ENCODE measurements at regions of chr18 and their contacts with region 1.

Region 1: DNA sequence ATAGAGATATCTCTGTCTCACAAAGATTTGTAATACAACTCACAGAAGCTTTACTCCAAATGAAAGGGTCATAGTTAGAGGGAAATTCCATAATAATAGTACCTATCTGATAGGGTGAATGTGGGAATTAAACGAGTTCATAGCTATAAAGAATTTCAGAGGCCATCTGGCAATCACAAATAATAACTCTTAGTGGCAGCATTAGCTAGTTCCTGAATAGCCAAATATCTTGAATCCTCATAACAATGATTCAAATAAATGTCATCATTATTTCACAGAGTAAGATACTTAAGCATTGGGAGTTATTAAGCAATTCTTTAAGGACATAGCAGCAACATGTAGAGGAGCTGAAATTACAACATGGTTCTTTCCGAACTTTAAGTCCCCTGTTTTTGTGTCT is 1265.0 kb upstream of the PIK3C3 start:
- DNase-seq: no peak
- H3K4me3 ChIP-seq: no peak overlapping the region
- H3K27ac ChIP-seq: no peak overlapping the region
- H3K4me1 ChIP-seq: no peaks in the 10 kb centered on the region
- H3K27me3 ChIP-seq: no peaks in the 10 kb centered on the region
- CTCF ChIP-seq: no peak
- POLR2A ChIP-seq: no peak

Region 2: DNA sequence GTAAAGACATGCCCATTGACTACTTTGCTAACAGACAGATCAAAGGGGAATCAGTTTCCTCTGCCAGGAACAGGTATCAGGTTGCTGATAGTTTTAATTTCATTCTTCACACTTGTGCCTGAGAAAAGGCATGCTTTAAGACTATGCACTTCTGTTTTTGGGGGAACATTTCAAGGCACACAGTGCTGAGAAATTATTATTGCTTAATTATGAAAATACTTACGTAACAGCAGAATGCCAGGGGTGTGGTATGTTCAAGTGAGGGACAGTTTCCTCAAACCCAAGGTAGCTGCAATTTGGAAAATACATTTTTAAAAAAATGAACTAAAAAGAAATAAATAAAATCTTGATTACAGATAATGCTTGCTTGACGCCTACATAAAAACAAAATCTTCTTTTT is 481.1 kb before region 1 on chr18:
- intact Hi-C with region 1: no loop called
- DNase-seq: no peak
- H3K4me3 ChIP-seq: no peak overlapping the region
- H3K27ac ChIP-seq: no peak overlapping the region
- H3K4me1 ChIP-seq: no peaks in the 10 kb centered on the region
- H3K27me3 ChIP-seq: no peaks in the 10 kb centered on the region
- CTCF ChIP-seq: no peak
- POLR2A ChIP-seq: no peak

Region 3: GRCh38 chr18:40670668-40671375 is 19.2 kb before region 1 on chr18:
- intact Hi-C with region 1: loop called (anchors 2 kb)
- DNase-seq: no peak
- H3K4me3 ChIP-seq: no peak overlapping the region
- H3K27ac ChIP-seq: no peak overlapping the region
- H3K4me1 ChIP-seq: no peaks in the 10 kb centered on the region
- H3K27me3 ChIP-seq: no peaks in the 10 kb centered on the region
- CTCF ChIP-seq: no peak
- POLR2A ChIP-seq: no peak